Thyroid gland (tissue), 4 donors: ENCODE measurements at regions of chr11 and their contacts with region 1.

Region 1: GRCh38 chr11:117438371-117439000 is 110.8 kb downstream of the CEP164 start:
- DNase-seq: peak; percentile 85 to 92
- H3K4me3 ChIP-seq: no peak overlapping the region
- H3K27ac ChIP-seq: peak overlapping the region in 2 of 3 donors; percentile 39 to 67
- H3K4me1 ChIP-seq: peaks cover 5 to 25% of the 10 kb centered on the region in 2 donors
- H3K27me3 ChIP-seq: no peaks in the 10 kb centered on the region
- CTCF ChIP-seq: no peak
- POLR2A ChIP-seq: no peak

Region 2: GRCh38 chr11:117290809-117291396 is 147.6 kb before region 1 on chr11 and contains the start of gene BACE1-AS:
- intact Hi-C with region 1: no loop called
- DNase-seq: no peak
- H3K4me3 ChIP-seq: no peak within 1 kb of the TSS
- H3K27ac ChIP-seq: no peak within 1 kb of the TSS
- H3K4me1 ChIP-seq: peaks cover 0 to 3% of the 10 kb centered on the region in 2 donors
- H3K27me3 ChIP-seq: no peaks in the 10 kb centered on the region
- CTCF ChIP-seq: no peak
- POLR2A ChIP-seq: no peak
- total RNA-seq, gene BACE1-AS: 7.4 to 12.9 (median 8.8) TPM

Region 3: DNA sequence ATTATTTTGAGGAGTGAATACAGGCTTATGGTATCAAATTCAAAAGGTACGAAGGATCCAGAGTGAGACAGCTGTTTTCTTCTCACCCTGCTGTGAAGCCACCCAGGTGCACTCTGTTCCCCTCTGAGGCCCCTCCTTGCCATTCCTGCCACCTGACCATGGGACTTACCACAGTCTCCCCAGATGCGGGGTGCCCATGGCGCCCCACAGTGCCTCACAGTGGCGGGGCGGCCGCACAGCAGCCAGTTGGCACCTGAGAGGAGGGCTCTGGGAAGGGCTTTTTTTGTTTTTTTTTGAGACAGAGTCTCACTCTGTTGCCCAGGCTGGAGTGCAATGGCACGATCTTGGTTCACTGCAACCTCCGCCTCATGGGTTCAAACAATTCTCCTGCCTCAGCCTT is 40.9 kb after region 1 on chr11:
- intact Hi-C with region 1: no loop called
- DNase-seq: no peak
- H3K4me3 ChIP-seq: no peak overlapping the region
- H3K27ac ChIP-seq: no peak overlapping the region
- H3K4me1 ChIP-seq: peaks cover 7 to 11% of the 10 kb centered on the region in 2 donors
- H3K27me3 ChIP-seq: no peaks in the 10 kb centered on the region
- CTCF ChIP-seq: no peak
- POLR2A ChIP-seq: no peak

Region 4: GRCh38 chr11:117492578-117493251 is 54.2 kb after region 1 on chr11:
- intact Hi-C with region 1: no loop called
- DNase-seq: no peak
- H3K4me3 ChIP-seq: no peak overlapping the region
- H3K27ac ChIP-seq: no peak overlapping the region
- H3K4me1 ChIP-seq: peaks cover 0 to 10% of the 10 kb centered on the region in 2 donors
- H3K27me3 ChIP-seq: no peaks in the 10 kb centered on the region
- CTCF ChIP-seq: no peak
- POLR2A ChIP-seq: no peak

Region 5: DNA sequence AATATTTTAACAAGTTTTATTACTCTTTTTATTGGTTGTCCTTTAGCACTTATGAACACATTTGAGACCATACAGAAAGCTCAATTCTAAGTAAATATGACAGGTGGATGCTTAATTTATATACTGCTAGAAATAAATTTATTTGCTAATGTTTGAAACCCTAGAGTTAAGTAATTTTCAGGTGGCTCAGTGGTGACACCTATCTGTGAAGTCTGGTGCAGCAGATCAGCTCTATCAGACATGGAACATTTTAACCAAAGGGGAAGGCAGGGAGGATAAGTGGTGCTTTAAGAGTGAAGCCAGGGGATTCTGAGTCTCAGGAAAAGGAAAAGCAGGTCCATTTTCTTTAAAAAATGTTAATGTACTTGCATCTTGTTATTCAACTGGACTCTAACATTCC is 182.7 kb after region 1 on chr11:
- intact Hi-C with region 1: loop called (anchors 10 kb)
- DNase-seq: no peak
- H3K4me3 ChIP-seq: no peak overlapping the region
- H3K27ac ChIP-seq: no peak overlapping the region
- H3K4me1 ChIP-seq: peaks cover 3 to 16% of the 10 kb centered on the region in 2 donors
- H3K27me3 ChIP-seq: no peaks in the 10 kb centered on the region
- CTCF ChIP-seq: peak in 3 of 6 experiments; percentile 38 to 45 (median 43)
- POLR2A ChIP-seq: no peak

Region 6: GRCh38 chr11:117885777-117886176 is 447.3 kb after region 1 on chr11:
- intact Hi-C with region 1: no loop called
- DNase-seq: no peak
- H3K4me3 ChIP-seq: no peak overlapping the region
- H3K27ac ChIP-seq: peak overlapping the region in 2 of 3 donors; percentile 42 to 44
- H3K4me1 ChIP-seq: peaks cover 21 to 46% of the 10 kb centered on the region in 2 donors
- H3K27me3 ChIP-seq: no peaks in the 10 kb centered on the region
- CTCF ChIP-seq: no peak
- POLR2A ChIP-seq: no peak